CD4-positive, alpha-beta memory T cell (primary cell): ENCODE measurements at regions of chr7 and their contacts with region 1.

Region 1: GRCh38 chr7:100101016-100101862 is at the starts of genes AP4M1 and MCM7:
- DNase-seq: peak; percentile 94 to 97 (median 94)
- H3K4me3 ChIP-seq: peak within 1 kb of the TSS; percentile 95
- H3K4me3 Mint-ChIP-seq: peak within 1 kb of the TSS; percentile 92 to 95 (median 93)
- H3K27ac ChIP-seq: peak within 1 kb of the TSS; percentile 96
- H3K27ac Mint-ChIP-seq: peak within 1 kb of the TSS; percentile 93 to 99 (median 97)
- H3K4me1 ChIP-seq: peaks cover 29% of the 10 kb centered on the region
- H3K4me1 Mint-ChIP-seq: peaks cover 22 to 46% (median 34%) of the 10 kb centered on the region in 4 donors
- H3K27me3 ChIP-seq: no peaks in the 10 kb centered on the region
- H3K27me3 Mint-ChIP-seq: peaks cover 0 to 2% of the 10 kb centered on the region in 2 donors
- total RNA-seq, gene AP4M1: 12.1 to 14.9 TPM
- total RNA-seq, gene MCM7: 164 to 173 TPM

Region 2: DNA sequence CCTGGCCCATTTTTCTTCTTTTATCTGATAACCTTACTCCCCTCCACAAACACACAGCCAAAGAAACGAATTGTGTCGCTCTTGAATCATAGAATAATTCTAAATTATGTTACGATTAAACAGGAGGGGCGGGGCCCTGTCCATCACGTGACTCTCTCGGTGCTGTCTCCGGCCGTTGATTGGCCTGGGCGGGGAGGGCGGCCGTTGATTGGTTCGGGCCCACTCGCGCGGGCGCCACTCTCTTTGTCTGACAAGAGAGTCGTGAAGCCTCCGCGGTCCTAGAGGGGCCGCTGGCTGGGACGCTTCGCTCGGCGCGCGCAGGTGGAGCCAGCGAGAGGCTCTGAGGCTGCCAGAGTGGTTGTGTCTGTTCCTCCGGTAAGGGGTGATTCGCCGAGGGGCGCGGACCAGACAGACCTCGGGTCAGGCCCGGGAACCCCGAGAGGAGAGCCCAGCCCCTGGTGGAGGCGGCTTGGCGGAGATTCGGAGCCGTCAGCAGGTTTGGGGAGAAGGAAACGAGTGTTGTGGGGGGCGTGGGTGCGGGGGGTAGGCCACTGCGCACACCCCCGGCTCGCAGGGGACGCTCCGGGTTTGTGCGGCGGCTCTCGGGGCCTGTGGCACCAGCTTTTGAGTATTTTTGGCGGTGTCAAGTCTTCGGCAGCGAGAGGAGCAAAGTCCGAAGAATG is 628.5 kb before region 1 on chr7 and contains the start of gene ZNF789:
- CTCF ChIA-PET with region 1: no interaction called
- POLR2A ChIA-PET with region 1: no interaction called
- intact Hi-C with region 1: loop called (anchors 5 kb)
- DNase-seq: peak; percentile 94 to 99 (median 95)
- H3K4me3 ChIP-seq: peak within 1 kb of the TSS; percentile 90 to 93
- H3K4me3 Mint-ChIP-seq: peak within 1 kb of the TSS; percentile 92 to 99 (median 96)
- H3K27ac ChIP-seq: peak within 1 kb of the TSS; percentile 80
- H3K27ac Mint-ChIP-seq: peak within 1 kb of the TSS; percentile 90 to 98 (median 95)
- H3K4me1 ChIP-seq: peaks cover 14% of the 10 kb centered on the region
- H3K4me1 Mint-ChIP-seq: peaks cover 17 to 49% (median 31%) of the 10 kb centered on the region in 4 donors
- H3K27me3 ChIP-seq: no peaks in the 10 kb centered on the region
- H3K27me3 Mint-ChIP-seq: no peaks in the 10 kb centered on the region
- total RNA-seq, gene ZNF789: 20.8 to 21.2 TPM

Region 3: DNA sequence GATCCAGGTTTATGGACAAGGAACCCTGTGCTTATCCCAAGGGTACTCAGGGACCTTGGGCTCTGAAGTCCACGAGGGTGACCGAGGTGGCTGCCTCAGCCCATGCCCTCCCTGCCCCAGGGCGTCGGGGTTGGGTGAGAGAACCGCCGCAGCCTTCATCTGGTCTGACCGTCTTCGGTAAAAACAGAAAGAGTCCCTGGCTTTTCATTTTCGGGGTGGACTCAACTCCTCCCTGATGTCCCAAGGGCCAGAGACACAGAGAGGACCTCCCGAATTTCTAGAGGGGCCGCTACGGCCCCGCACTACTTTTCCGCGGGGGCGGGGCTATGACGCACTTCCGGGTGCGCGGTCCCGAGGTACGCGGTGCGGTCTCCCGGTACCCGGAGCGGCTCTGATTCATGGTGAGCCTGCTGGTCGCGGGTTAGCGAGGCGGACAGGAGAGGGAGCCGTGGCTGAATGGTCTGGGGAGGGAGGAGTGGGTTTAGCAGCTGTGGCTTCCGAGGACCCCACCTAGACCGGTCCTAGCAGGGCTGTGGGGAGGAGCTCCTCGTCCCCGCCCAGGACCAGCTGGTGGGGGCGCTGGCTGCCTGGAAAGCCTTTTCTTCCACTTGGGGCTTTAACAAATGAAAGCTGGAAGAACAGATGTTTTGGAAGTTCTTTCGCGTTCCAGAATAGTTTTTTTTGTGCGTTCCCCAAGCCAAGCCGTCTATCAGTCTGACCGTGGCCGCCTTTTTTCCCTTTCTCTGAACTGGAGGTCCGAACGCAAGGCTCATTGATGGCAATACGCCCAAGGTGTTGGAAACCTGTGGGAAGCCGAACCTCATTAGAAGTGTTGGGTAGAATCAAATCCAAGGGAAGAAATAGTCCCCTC is 51.6 kb before region 1 on chr7 and contains the start of gene ZSCAN21:
- CTCF ChIA-PET with region 1: no interaction called
- POLR2A ChIA-PET with region 1: interaction called, 23 read pairs
- intact Hi-C with region 1: loop called (anchors 1 kb)
- DNase-seq: peak; percentile 76 to 82 (median 77)
- H3K4me3 ChIP-seq: peak within 1 kb of the TSS; percentile 67 to 94
- H3K4me3 Mint-ChIP-seq: peak within 1 kb of the TSS; percentile 91 to 97 (median 94)
- H3K27ac ChIP-seq: peak within 1 kb of the TSS; percentile 83
- H3K27ac Mint-ChIP-seq: peak within 1 kb of the TSS; percentile 91 to 98 (median 97)
- H3K4me1 ChIP-seq: peaks cover 13% of the 10 kb centered on the region
- H3K4me1 Mint-ChIP-seq: peaks cover 11 to 28% (median 18%) of the 10 kb centered on the region in 4 donors
- H3K27me3 ChIP-seq: no peaks in the 10 kb centered on the region
- H3K27me3 Mint-ChIP-seq: no peaks in the 10 kb centered on the region
- total RNA-seq, gene ZSCAN21: 9.9 to 10.6 TPM

Region 4: DNA sequence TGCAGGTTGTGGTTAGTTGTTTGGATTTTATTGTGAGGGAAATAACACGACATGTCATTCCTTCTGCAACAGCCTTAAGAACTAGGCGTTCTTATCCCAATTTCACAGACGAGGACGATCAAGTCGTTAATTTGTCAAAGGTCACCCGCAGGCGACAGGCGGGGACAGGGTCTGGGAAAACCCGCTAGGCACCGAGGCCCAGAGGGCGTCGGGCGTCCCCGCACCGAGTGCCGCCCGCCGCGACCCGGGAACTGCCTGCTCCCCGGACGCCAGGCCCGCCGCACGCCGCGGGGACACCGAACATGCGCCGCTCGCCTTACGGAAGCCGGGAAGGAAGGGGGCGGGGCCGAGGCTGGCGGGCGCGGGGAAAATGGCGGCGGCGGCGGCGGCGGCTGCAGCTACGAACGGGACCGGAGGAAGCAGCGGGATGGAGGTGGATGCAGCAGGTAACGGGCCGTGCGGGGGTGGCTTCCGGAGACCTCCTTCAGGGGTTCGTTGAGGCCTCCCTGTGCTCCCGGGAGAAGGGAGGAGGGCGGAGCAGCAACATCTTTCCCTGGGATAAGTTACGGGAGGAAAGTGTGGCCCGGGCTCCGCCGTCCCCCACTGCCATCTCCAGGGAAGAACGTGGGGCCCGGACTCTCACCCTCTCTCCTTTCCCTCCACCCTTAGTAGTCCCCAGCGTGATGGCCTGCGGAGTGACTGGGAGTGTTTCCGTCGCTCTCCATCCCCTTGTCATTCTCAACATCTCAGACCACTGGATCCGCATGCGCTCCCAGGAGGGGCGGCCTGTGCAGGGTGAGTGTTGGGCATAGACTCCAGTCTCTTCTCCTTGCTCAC is 12.4 kb before region 1 on chr7 and contains the start of gene COPS6:
- CTCF ChIA-PET with region 1: interaction called, 19 read pairs
- POLR2A ChIA-PET with region 1: interaction called, 83 read pairs
- intact Hi-C with region 1: loop called (anchors 1 kb)
- DNase-seq: peak; percentile 83 to 91 (median 85)
- H3K4me3 ChIP-seq: peak within 1 kb of the TSS; percentile 57 to 82
- H3K4me3 Mint-ChIP-seq: peak within 1 kb of the TSS; percentile 86 to 94 (median 91)
- H3K27ac ChIP-seq: peak within 1 kb of the TSS; percentile 76
- H3K27ac Mint-ChIP-seq: peak within 1 kb of the TSS; percentile 90 to 97 (median 95)
- H3K4me1 ChIP-seq: peaks cover 16% of the 10 kb centered on the region
- H3K4me1 Mint-ChIP-seq: peaks cover 15 to 35% (median 27%) of the 10 kb centered on the region in 4 donors
- H3K27me3 ChIP-seq: no peaks in the 10 kb centered on the region
- H3K27me3 Mint-ChIP-seq: no peaks in the 10 kb centered on the region
- total RNA-seq, gene COPS6: 85.5 to 89.2 TPM

Region 5: DNA sequence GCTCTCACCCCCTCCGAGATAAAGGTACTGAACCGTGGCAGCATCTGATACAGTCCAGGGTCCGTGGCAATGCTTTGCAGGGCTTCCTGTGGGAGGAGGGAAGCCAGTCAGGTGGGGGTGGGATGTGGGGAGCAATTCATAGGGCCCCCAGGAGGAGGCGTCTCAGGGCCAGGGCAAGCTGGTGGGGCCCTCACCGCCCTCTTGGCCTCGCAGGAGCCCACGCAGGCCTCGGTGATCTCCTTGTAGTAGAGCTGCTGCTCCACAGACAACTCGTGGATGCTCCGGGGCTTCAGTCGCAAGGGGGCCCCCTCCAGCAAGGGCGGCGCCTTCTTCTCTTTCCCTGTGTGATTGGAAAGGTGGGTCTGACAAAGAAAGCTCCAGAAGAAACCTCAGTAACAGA is 10.7 kb after region 1 on chr7:
- CTCF ChIA-PET with region 1: interaction called, 5 read pairs
- POLR2A ChIA-PET with region 1: interaction called, 20 read pairs
- intact Hi-C with region 1: no loop called
- DNase-seq: no peak
- H3K4me3 ChIP-seq: no peak overlapping the region
- H3K4me3 Mint-ChIP-seq: no peak overlapping the region
- H3K27ac ChIP-seq: no peak overlapping the region
- H3K27ac Mint-ChIP-seq: no peak overlapping the region
- H3K4me1 ChIP-seq: no peaks in the 10 kb centered on the region
- H3K4me1 Mint-ChIP-seq: peaks cover 0 to 4% (median 1%) of the 10 kb centered on the region in 4 donors
- H3K27me3 ChIP-seq: no peaks in the 10 kb centered on the region
- H3K27me3 Mint-ChIP-seq: no peaks in the 10 kb centered on the region

Region 6: DNA sequence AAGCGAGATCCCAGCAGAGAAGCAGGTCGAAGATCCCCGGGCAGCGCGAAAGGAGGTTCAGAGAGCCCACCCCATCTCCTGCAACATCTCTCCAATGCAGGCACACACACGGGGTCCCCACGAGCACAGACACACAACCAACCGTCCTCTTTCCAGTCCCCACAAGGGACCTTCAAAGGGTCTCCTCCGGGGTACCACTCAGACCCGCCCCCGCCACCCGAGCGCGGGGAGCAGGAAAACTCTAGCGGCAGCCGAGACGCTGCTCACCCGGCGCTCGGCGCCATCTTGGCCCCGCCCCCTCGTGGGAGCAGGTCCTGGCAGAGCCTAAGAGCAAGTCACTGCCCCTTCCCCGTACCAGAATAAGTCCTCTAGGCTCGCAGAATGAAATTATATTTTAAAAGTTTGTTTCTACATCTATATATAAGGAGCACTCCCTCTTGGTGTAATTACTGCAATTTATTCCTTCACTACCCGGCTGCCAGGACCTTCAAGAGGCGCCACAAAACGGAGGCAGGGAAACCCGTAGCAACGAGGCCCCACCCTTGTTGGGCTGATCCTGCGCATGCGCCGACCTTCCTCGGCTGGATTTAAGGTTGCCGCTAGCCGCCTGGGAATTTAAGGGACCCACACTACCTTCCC is 17.9 kb after region 1 on chr7 and contains the starts of genes CNPY4 and TAF6:
- CTCF ChIA-PET with region 1: interaction called, 5 read pairs
- POLR2A ChIA-PET with region 1: interaction called, 175 read pairs
- intact Hi-C with region 1: loop called (anchors 1 kb)
- DNase-seq: peak; percentile 96
- H3K4me3 ChIP-seq: peak within 1 kb of the TSS; percentile 89 to 95
- H3K4me3 Mint-ChIP-seq: peak within 1 kb of the TSS; percentile 94 to 99 (median 96)
- H3K27ac ChIP-seq: peak within 1 kb of the TSS; percentile 80
- H3K27ac Mint-ChIP-seq: peak within 1 kb of the TSS; percentile 95 to 100 (median 99)
- H3K4me1 ChIP-seq: peaks cover 26% of the 10 kb centered on the region
- H3K4me1 Mint-ChIP-seq: peaks cover 7 to 40% (median 26%) of the 10 kb centered on the region in 4 donors
- H3K27me3 ChIP-seq: no peaks in the 10 kb centered on the region
- H3K27me3 Mint-ChIP-seq: no peaks in the 10 kb centered on the region
- total RNA-seq, gene CNPY4: 69.0 to 69.8 TPM
- total RNA-seq, gene TAF6: 61.6 to 62.2 TPM

Region 7: GRCh38 chr7:100126931-100127865 is 26.0 kb after region 1 on chr7 and contains the start of gene MBLAC1:
- CTCF ChIA-PET with region 1: interaction called, 28 read pairs
- POLR2A ChIA-PET with region 1: interaction called, 175 read pairs
- intact Hi-C with region 1: loop called (anchors 1 kb)
- DNase-seq: peak; percentile 92 to 94 (median 93)
- H3K4me3 ChIP-seq: peak within 1 kb of the TSS; percentile 94 to 98
- H3K4me3 Mint-ChIP-seq: peak within 1 kb of the TSS; percentile 96 to 100 (median 99)
- H3K27ac ChIP-seq: peak within 1 kb of the TSS; percentile 87
- H3K27ac Mint-ChIP-seq: peak within 1 kb of the TSS; percentile 98 to 100 (median 100)
- H3K4me1 ChIP-seq: peaks cover 43% of the 10 kb centered on the region
- H3K4me1 Mint-ChIP-seq: peaks cover 20 to 46% (median 26%) of the 10 kb centered on the region in 4 donors
- H3K27me3 ChIP-seq: no peaks in the 10 kb centered on the region
- H3K27me3 Mint-ChIP-seq: no peaks in the 10 kb centered on the region
- total RNA-seq, gene MBLAC1: 6.4 to 6.8 TPM